CD8-positive, alpha-beta T cell (primary cell): ENCODE measurements at regions of chr15 and their contacts with region 1.

Region 1: GRCh38 chr15:85543741-85544155 is 163.3 kb downstream of the AKAP13 start:
- DNase-seq: peak; percentile 10 to 82 (median 61)
- ATAC-seq: peak; percentile 84
- H3K4me3 ChIP-seq: peak overlapping the region in 1 of 2 experiments; percentile 9
- H3K4me3 Mint-ChIP-seq: peak overlapping the region; percentile 67
- H3K27ac ChIP-seq: peak overlapping the region; percentile 11 to 24
- H3K27ac Mint-ChIP-seq: peak overlapping the region; percentile 78
- H3K4me1 ChIP-seq: peaks cover 40% of the 10 kb centered on the region
- H3K4me1 Mint-ChIP-seq: peaks cover 75% of the 10 kb centered on the region
- H3K27me3 ChIP-seq: no peaks in the 10 kb centered on the region
- H3K27me3 Mint-ChIP-seq: no peaks in the 10 kb centered on the region
- CTCF ChIP-seq: peak; percentile 34

Region 2: DNA sequence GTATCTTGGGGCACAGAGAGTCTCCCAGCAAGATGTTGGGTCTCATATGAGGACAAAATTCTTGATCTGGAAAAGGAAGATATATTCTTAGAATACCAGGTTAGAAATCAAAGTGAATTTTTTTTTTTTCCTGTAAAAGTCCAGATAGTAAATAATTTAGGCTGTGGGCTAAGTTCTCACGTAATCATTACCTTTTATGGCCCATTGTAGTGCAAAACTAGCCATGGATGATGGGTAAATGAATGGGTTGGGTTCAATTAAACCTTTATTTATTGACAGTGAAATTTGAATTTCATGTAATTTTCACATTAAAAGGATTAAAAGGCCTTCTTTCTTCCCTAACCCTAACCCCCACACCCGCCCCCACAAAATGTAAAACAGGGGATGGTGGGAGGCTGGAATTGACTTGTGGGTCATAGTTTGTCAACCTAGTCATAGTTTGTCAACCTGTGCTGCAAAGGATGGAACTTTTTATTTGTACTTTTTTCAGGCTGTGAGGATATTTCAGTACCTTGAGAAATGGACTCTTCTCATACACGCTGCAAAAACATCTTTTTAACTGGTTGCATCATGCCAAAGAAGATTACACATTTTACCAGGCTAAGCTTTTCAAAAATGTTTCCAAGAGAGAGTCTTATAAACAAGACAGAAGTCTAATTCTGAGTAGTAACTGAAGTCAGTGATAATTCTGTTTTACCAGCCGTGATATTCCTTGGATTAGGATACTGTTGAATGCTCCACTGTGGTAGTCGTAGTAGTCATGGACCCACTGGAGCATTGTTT is 24.6 kb before region 1 on chr15:
- CTCF ChIA-PET with region 1: no interaction called
- POLR2A ChIA-PET with region 1: no interaction called
- intact Hi-C with region 1: no loop called
- DNase-seq: no peak
- ATAC-seq: no peak
- H3K4me3 ChIP-seq: no peak overlapping the region
- H3K4me3 Mint-ChIP-seq: no peak overlapping the region
- H3K27ac ChIP-seq: no peak overlapping the region
- H3K27ac Mint-ChIP-seq: no peak overlapping the region
- H3K4me1 ChIP-seq: no peaks in the 10 kb centered on the region
- H3K4me1 Mint-ChIP-seq: peaks cover 55% of the 10 kb centered on the region
- H3K27me3 ChIP-seq: no peaks in the 10 kb centered on the region
- H3K27me3 Mint-ChIP-seq: no peaks in the 10 kb centered on the region
- CTCF ChIP-seq: no peak

Region 3: GRCh38 chr15:85555875-85556617 is 12.3 kb after region 1 on chr15:
- CTCF ChIA-PET with region 1: interaction called, 5 read pairs
- POLR2A ChIA-PET with region 1: interaction called, 6 read pairs
- intact Hi-C with region 1: loop called in 1 of 2 experiments (anchors 2 kb)
- DNase-seq: no peak
- ATAC-seq: no peak
- H3K4me3 ChIP-seq: no peak overlapping the region
- H3K4me3 Mint-ChIP-seq: no peak overlapping the region
- H3K27ac ChIP-seq: no peak overlapping the region
- H3K27ac Mint-ChIP-seq: no peak overlapping the region
- H3K4me1 ChIP-seq: peaks cover 4% of the 10 kb centered on the region
- H3K4me1 Mint-ChIP-seq: peaks cover 41% of the 10 kb centered on the region
- H3K27me3 ChIP-seq: no peaks in the 10 kb centered on the region
- H3K27me3 Mint-ChIP-seq: no peaks in the 10 kb centered on the region
- CTCF ChIP-seq: no peak

Region 4: GRCh38 chr15:85625856-85626255 is 82.1 kb after region 1 on chr15:
- CTCF ChIA-PET with region 1: no interaction called
- POLR2A ChIA-PET with region 1: no interaction called
- intact Hi-C with region 1: no loop called
- DNase-seq: peak in 3 of 9 experiments; percentile 11 to 82 (median 67)
- ATAC-seq: peak; percentile 72
- H3K4me3 ChIP-seq: no peak overlapping the region
- H3K4me3 Mint-ChIP-seq: peak overlapping the region; percentile 59
- H3K27ac ChIP-seq: peak overlapping the region; percentile 24 to 71
- H3K27ac Mint-ChIP-seq: peak overlapping the region; percentile 91
- H3K4me1 ChIP-seq: peaks cover 34% of the 10 kb centered on the region
- H3K4me1 Mint-ChIP-seq: peaks cover 73% of the 10 kb centered on the region
- H3K27me3 ChIP-seq: no peaks in the 10 kb centered on the region
- H3K27me3 Mint-ChIP-seq: no peaks in the 10 kb centered on the region
- CTCF ChIP-seq: no peak

Region 5: DNA sequence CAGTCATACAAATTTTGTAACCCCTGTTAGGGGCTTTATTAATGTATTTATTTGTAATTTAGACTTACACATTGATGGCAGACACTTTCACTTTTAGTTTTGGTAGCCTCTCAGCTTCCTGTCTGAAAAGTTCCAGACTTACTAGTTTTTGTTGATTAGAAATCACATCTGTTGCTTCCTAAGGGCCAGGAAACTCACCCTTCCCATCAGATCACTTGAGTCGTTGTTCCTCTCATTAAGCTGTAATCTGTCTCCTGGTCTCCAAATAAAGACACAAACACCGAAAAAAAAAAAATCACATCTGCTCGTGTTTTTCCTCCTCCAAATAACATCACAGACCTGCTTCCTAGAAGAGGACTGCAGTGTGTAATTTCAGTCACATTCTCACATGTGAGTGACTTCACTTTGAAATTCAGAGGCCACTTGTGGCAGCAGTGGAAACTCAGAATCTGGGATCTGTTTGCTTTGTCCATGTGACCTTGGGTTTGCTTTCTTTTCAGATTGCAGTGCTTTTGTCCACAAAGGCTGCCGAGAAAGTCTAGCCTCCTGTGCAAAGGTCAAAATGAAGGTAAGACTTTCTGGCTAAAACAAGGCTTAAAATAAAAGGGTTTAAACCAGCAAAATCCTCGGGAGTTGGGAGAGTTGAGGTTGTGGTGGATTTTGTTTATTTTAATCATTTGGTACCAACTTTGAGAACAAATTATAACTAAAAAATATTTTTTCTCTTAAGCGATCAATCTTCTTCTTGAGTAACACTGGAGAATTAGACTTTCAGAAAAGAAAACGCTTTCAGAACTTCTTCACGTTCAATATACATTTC is 164.0 kb after region 1 on chr15:
- CTCF ChIA-PET with region 1: no interaction called
- POLR2A ChIA-PET with region 1: no interaction called
- intact Hi-C with region 1: loop called in 1 of 2 experiments (anchors 5 kb)
- DNase-seq: no peak
- ATAC-seq: peak; percentile 22
- H3K4me3 ChIP-seq: peak overlapping the region; percentile 32 to 40
- H3K4me3 Mint-ChIP-seq: peak overlapping the region; percentile 77
- H3K27ac ChIP-seq: peak overlapping the region; percentile 66 to 97
- H3K27ac Mint-ChIP-seq: peak overlapping the region; percentile 99
- H3K4me1 ChIP-seq: peaks cover 56% of the 10 kb centered on the region
- H3K4me1 Mint-ChIP-seq: peaks cover 82% of the 10 kb centered on the region
- H3K27me3 ChIP-seq: no peaks in the 10 kb centered on the region
- H3K27me3 Mint-ChIP-seq: no peaks in the 10 kb centered on the region
- CTCF ChIP-seq: no peak